ENCODE measurements at regions of chr10 and their contacts with region 1.

Region 1: GRCh38 chr10:24209946-24210491 is 1.1 kb downstream of the KIAA1217 start:
- ATAC-seq: peak; percentile 4 to 75 (median 41)
- H3K4me3 ChIP-seq: peak overlapping the region; percentile 15 to 39 (median 25)
- H3K27ac ChIP-seq: peak overlapping the region in 1 of 2 donors; percentile 22
- H3K4me1 ChIP-seq: peaks cover 12 to 21% of the 10 kb centered on the region in 2 donors

Region 2: GRCh38 chr10:23643111-23643780 is 566.8 kb before region 1 on chr10:
- in situ Hi-C with region 1: no loop called
- ATAC-seq: peak in 2 of 8 experiments; percentile 54 to 65
- H3K4me3 ChIP-seq: no peak overlapping the region
- H3K27ac ChIP-seq: no peak overlapping the region
- H3K4me1 ChIP-seq: peaks cover 0 to 2% of the 10 kb centered on the region in 2 donors

Region 3: GRCh38 chr10:24360282-24361127 is 150.5 kb after region 1 on chr10:
- in situ Hi-C with region 1: loop called in 2 of 9 experiments (anchors 25 kb)
- ATAC-seq: peak; percentile 52 to 94 (median 70)
- H3K4me3 ChIP-seq: no peak overlapping the region
- H3K27ac ChIP-seq: no peak overlapping the region
- H3K4me1 ChIP-seq: peaks cover 0 to 2% of the 10 kb centered on the region in 2 donors

Region 4: DNA sequence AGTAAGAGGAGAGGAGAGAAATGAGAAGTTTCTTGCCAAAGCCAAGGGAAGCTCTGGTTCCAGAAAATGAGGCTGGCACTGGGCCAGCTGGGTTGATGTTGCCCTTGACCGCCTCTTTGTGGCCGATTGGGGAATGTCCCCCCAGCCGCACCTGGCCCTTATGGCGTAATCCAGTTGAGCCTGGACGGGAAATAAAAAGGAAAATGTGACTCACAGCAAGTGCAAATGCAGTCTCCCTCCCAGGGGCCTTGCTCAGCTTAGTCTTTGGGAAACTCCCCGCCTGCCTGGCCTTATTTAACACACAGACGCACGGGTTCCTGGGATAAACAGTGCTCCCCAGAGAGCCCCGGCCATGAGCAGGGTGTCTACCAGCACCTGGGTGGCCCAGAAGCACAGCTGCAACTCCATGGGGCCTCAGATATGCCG is 173.7 kb after region 1 on chr10:
- in situ Hi-C with region 1: no loop called
- ATAC-seq: peak; percentile 45 to 99 (median 97)
- H3K4me3 ChIP-seq: no peak overlapping the region
- H3K27ac ChIP-seq: no peak overlapping the region
- H3K4me1 ChIP-seq: peaks cover 0 to 7% of the 10 kb centered on the region in 2 donors

Region 5: DNA sequence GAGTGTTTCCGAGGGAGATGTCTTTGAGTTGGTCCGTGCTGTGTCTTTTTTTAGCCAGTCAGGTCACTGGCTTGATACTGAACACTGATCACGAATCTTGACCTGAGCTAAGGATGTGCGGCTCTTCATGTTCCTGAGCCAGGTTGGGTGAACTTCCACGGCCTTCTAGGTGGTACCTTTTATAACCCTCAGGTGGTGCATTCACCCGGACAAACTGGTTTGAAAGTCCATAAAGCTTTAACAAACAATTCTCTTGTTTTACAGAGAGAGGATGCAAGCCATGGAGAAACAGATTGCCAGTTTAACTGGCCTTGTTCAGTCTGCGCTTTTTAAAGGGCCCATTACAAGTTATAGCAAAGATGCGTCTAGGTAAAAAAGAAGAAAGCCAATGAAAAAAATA is 284.2 kb after region 1 on chr10:
- in situ Hi-C with region 1: no loop called
- ATAC-seq: no peak
- H3K4me3 ChIP-seq: no peak overlapping the region
- H3K27ac ChIP-seq: no peak overlapping the region
- H3K4me1 ChIP-seq: no peaks in the 10 kb centered on the region

Region 6: DNA sequence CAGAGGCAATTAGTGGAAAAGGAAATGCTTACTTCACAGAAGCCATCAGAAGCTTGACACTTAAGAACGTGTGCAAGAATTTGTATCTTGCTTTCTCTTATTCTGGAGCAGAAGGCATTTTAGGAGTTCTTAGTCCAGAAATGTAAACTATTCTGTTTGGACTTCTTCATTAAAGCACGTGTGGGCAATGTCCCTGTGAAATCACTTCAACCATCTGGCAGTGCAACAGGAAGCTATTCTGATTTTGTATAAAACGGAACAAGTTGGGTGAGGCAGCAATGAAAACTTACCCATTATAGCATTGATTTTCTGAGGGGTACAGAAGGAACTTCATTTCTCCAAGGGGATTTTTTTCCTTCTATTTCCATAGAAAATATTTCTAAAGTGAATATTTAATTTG is 534.9 kb after region 1 on chr10:
- in situ Hi-C with region 1: no loop called
- ATAC-seq: peak in 1 of 8 experiments; percentile 71
- H3K4me3 ChIP-seq: no peak overlapping the region
- H3K27ac ChIP-seq: no peak overlapping the region
- H3K4me1 ChIP-seq: no peaks in the 10 kb centered on the region

Measured in motor neuron (in vitro differentiated cells).